Heart left ventricle (tissue), 16 donors: ENCODE measurements at regions of chr1 and their contacts with region 1.

Region 1: DNA sequence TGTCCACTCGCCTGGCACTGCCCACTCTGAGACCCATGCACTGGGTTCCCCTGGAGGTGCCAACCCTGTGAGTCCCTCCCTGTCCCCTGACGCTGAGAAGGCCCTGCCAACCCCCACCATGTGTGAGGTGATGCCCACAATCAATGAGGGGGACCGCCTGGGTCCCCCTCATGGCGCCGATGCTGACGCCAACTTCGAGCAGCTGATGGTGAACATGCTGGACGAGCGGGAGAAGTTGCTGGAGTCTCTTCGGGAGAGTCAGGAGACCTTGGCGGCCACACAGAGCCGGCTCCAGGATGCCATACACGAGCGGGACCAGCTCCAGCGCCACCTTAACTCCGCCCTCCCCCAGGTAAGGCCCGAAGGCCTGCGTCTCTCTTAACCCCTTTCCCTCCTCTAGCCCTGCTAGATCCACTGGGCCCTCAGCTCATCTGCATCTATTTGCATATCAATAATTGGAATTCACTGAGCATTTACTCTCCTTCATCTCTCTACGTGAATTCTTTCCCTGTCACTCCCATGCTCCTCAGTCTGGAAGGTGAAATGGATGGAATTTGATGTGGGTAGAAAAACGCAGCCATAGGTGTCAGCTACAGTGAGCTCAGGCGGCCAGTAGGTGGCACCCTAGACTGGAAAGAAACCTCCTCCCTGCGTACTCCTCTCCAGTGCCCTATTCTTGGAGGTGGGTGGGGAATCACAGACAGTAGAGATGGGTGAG is 12.8 kb downstream of the PPFIA4 start:
- DNase-seq: peak; percentile 75 to 82 (median 80)
- ATAC-seq: peak; percentile 70 to 82 (median 79)
- H3K4me3 ChIP-seq: no peak overlapping the region
- H3K27ac ChIP-seq: peak overlapping the region in 10 of 12 donors; percentile 63 to 90 (median 80)
- H3K4me1 ChIP-seq: peaks cover 0 to 73% (median 34%) of the 10 kb centered on the region in 12 donors
- H3K27me3 ChIP-seq: peaks cover 0 to 5% (median 0%) of the 10 kb centered on the region in 9 donors
- CTCF ChIP-seq: peak; percentile 86 to 96 (median 92)
- POLR2A ChIP-seq: no peak

Region 2: DNA sequence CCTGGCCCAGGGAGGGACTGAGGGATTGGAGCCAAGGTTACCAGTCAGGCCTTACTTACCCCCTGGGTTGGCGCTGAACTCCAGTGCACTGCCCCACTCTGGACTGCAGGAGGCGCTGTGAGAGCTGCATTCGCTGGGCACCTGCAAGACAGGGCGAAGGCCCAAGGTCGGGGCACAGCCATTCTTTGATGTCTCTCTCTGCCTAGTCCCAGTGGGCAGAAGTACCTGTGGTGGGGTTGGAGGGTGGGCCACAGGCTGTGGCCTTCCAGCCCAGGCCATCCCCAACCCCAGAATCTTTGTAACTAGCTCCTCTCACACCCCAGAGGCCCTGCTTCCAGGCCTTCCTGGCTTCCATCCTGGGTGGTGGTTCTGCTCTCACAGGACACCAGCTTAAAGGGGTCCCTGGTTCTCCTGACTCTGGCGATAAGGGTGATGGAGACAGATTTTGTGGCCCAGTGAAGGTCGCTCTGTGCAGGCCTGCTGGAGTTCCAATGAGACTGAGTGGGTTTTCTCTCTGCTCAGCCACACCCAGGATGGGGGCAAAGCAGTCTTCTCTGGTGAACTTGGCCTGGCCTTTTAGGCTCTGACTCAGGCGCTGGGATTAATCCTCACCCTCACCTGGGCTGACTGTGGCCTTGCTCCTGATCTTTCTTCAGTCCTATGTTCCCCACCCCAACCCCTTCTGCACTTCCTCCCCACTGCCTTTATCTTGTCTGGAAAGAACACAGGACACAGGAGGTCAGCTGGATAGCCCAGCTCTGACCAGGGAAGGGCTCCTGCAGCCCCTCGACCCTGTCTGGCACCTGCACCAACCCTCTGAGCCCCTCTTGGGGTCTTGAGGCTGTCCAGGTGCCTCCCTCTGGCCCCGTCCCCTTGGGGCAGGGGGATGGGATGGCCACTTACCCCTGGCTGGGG is 45.8 kb after region 1 on chr1:
- intact Hi-C with region 1: loop called in 1 of 10 experiments (anchors 5 kb)
- DNase-seq: no peak
- ATAC-seq: peak in 1 of 4 donors; percentile 10
- H3K4me3 ChIP-seq: no peak overlapping the region
- H3K27ac ChIP-seq: no peak overlapping the region
- H3K4me1 ChIP-seq: peaks cover 0 to 15% (median 0%) of the 10 kb centered on the region in 12 donors
- H3K27me3 ChIP-seq: no peaks in the 10 kb centered on the region
- CTCF ChIP-seq: peak in 6 of 12 donors; percentile 9 to 30 (median 20)
- POLR2A ChIP-seq: no peak

Region 3: GRCh38 chr1:203117611-203118575 is 78.8 kb after region 1 on chr1:
- intact Hi-C with region 1: loop called in 2 of 10 experiments (anchors 5 kb)
- DNase-seq: peak; percentile 74 to 87 (median 80)
- ATAC-seq: peak; percentile 83 to 97 (median 94)
- H3K4me3 ChIP-seq: no peak overlapping the region
- H3K27ac ChIP-seq: no peak overlapping the region
- H3K4me1 ChIP-seq: peaks cover 0 to 11% (median 3%) of the 10 kb centered on the region in 12 donors
- H3K27me3 ChIP-seq: peaks cover 0 to 54% (median 12%) of the 10 kb centered on the region in 9 donors
- CTCF ChIP-seq: peak; percentile 61 to 83 (median 78)
- POLR2A ChIP-seq: no peak

Region 4: GRCh38 chr1:203144661-203145060 is 105.6 kb after region 1 on chr1:
- intact Hi-C with region 1: no loop called
- DNase-seq: no peak
- ATAC-seq: peak in 2 of 4 donors; percentile 8 to 19
- H3K4me3 ChIP-seq: no peak overlapping the region
- H3K27ac ChIP-seq: no peak overlapping the region
- H3K4me1 ChIP-seq: peaks cover 0 to 15% (median 2%) of the 10 kb centered on the region in 12 donors
- H3K27me3 ChIP-seq: no peaks in the 10 kb centered on the region
- CTCF ChIP-seq: no peak
- POLR2A ChIP-seq: no peak

Region 5: DNA sequence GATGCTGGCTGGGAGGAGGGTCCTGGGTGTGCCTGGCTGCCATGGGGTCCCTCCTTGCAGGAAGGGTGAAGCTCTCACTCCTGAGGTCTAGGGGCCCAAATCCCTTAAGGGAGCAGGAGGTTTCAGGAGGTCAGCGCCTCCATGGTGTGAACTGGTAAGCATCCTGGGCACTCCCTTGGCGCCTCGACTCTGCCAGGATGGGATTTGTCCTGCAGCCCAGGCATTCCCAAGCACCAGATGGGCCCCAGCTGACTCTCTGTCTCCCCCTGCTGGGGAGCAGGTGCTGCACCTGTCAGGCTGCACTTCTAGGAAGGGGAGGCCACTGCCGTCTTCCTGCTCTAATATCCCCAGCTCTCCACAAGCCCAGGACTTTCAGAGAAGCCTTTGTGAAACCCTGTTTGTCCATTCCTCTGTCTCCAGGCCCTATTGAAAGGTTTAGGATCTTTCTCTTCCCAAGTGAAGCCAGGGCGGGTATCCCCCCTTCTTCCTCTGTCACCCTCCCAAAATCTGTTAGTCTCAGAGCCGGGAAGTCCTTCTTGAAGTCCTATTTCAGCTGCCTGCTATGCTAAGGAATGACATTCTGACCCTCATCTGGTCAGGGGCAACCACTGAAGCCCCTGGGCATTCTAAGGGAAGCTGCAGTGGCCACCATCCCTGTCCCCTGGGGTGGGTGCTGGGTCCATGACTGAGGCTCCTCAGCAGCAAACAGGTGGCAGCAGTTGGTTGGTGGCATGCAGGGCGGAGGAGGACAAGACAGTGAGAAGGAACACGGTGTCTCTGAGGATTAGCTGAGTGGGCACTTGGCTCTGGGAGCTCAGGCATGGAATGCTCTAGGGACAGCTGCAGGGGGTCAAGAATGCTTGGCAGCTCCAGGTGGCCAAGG is 133.3 kb after region 1 on chr1:
- intact Hi-C with region 1: loop called in 7 of 10 experiments (anchors 1 to 5 kb)
- DNase-seq: peak; percentile 48 to 78 (median 63)
- ATAC-seq: peak; percentile 60 to 82 (median 68)
- H3K4me3 ChIP-seq: no peak overlapping the region
- H3K27ac ChIP-seq: no peak overlapping the region
- H3K4me1 ChIP-seq: peaks cover 0 to 15% (median 0%) of the 10 kb centered on the region in 12 donors
- H3K27me3 ChIP-seq: no peaks in the 10 kb centered on the region
- CTCF ChIP-seq: peak; percentile 71 to 87 (median 78)
- POLR2A ChIP-seq: no peak

Region 6: DNA sequence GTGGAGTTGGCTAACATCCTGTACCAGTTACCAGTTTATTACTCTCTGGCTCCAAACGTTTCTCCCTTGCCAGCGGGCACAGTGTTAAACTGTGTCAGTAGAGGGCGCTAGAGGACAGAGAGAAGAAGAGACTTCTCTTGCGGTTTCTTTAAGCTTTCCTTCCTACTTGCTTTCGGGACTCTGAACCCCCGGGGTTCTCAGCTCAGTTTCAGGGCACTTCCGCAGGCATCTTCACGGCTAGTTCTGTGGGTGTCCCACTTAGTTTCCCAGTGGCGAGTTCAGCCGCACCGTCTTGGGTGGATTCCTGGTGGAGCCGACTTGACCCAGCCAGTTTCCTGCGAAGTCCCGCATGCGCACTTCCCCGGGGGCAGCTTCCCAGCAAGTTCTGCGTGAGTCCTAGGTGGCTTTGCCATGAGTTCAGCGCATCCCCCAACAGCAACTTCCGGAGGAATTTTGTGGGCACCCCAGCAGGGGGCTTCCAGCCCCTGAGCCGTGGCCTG is 228.3 kb after region 1 on chr1:
- intact Hi-C with region 1: loop called in 4 of 10 experiments (anchors 1 to 5 kb)
- DNase-seq: peak; percentile 81 to 89 (median 84)
- ATAC-seq: peak; percentile 47 to 74 (median 72)
- H3K4me3 ChIP-seq: peak overlapping the region; percentile 37 to 69 (median 60)
- H3K27ac ChIP-seq: peak overlapping the region; percentile 63 to 92 (median 87)
- H3K4me1 ChIP-seq: peaks cover 0 to 27% (median 8%) of the 10 kb centered on the region in 12 donors
- H3K27me3 ChIP-seq: no peaks in the 10 kb centered on the region
- CTCF ChIP-seq: peak; percentile 85 to 97 (median 95)
- POLR2A ChIP-seq: no peak

Region 7: GRCh38 chr1:203340112-203340804 is 301.2 kb after region 1 on chr1:
- intact Hi-C with region 1: loop called in 3 of 10 experiments (anchors 10 kb)
- DNase-seq: peak in 4 of 5 donors; percentile 65 to 79 (median 69)
- ATAC-seq: peak; percentile 73 to 86 (median 83)
- H3K4me3 ChIP-seq: no peak overlapping the region
- H3K27ac ChIP-seq: peak overlapping the region in 1 of 12 donors; percentile 8
- H3K4me1 ChIP-seq: peaks cover 0 to 36% (median 10%) of the 10 kb centered on the region in 12 donors
- H3K27me3 ChIP-seq: peaks cover 0 to 16% (median 0%) of the 10 kb centered on the region in 9 donors
- CTCF ChIP-seq: peak in 11 of 12 donors; percentile 73 to 94 (median 90)
- POLR2A ChIP-seq: no peak